ENCODE measurements at regions of chr7 and their contacts with region 1.

Region 1: DNA sequence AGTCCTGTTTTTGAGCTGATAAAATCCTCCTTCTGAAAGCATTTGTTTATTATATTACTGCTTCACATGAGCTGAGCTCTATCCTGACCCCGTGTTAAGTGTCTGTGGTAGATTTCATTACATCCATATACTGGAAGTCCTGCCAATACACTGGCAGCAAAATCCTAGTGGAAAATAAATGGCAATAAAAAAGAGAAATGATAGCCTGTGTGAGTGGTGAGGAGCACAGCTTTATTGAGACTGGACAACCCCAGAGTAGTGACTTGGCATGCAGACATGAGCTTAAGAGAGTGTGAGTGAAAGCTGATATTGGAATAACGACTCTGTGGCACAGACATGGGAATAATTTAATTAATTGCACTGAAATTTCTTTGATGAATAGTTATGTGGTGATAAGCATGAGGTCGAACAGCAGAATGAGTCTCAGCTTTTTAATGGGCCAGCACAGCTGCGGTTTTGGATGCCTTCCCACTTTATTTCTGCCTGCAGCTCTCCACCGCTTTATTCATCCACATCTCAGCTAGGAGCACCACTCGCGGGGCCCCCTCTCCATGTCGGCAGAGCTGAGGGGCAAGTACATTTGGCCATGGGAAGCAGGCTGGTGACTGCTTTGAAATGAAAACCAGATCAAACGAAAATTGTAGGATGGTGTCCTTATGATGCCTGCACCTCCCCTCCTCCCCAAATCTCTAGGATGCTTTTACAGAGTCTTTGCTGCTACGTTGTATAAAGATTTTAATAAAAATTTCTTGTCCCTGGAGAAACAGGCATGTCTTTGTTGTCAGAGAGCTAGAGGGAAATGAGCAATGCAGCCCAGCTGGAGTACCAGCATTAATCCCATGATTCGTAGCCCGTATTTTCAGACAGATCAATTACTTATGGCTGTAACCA is 494.3 kb downstream of the AUTS2 start:
- DNase-seq: peak; percentile 15 to 63
- ATAC-seq: peak; percentile 75 to 90 (median 85)
- H3K4me3 ChIP-seq: peak overlapping the region; percentile 37
- H3K27ac ChIP-seq: peak overlapping the region; percentile 71
- H3K4me1 ChIP-seq: peaks cover 39% of the 10 kb centered on the region
- H3K27me3 ChIP-seq: no peaks in the 10 kb centered on the region
- CTCF ChIP-seq: no peak

Region 2: DNA sequence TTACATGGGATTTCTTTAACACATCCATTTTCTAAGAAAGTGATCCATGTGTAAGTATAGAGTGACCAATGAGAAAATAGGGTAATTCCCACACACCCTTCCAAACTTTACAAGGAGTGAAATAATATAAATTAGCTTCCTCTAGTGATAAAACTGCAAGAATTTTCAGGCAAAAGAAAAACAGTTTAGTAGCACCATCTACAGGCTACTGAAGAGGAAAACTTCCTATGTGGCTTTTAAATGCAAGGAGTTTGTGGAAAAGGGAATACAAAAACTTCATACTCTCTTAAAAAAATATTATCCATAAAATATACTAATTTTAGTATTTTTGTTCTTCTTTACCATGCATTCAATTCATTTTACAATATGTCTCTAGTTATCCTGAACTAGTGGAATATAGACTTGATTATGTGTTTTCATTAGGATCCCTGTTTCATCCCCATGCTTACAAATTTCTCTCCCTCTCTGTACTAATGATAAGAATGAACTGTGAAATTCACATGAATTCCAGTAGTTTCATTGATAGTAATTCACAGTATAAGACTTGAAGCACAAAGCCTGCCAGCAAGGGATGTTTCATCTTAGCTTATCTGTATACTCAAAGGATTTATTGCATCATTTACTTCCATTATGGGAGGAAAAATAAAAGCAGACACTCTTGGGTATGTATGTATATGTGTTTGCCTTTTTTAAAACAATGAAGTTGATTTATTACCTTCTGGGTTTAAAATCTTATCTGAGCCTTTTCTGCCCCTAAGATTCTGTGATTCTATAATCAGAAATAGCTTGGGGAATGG is 51.4 kb before region 1 on chr7:
- intact Hi-C with region 1: no loop called
- DNase-seq: no peak
- ATAC-seq: peak in 1 of 4 donors; percentile 49
- H3K4me3 ChIP-seq: no peak overlapping the region
- H3K27ac ChIP-seq: no peak overlapping the region
- H3K4me1 ChIP-seq: peaks cover 12% of the 10 kb centered on the region
- H3K27me3 ChIP-seq: no peaks in the 10 kb centered on the region
- CTCF ChIP-seq: peak; percentile 55

Region 3: GRCh38 chr7:70060298-70061068 is 32.1 kb before region 1 on chr7:
- intact Hi-C with region 1: loop called in 1 of 2 experiments (anchors 2 kb)
- DNase-seq: no peak
- ATAC-seq: no peak
- H3K4me3 ChIP-seq: no peak overlapping the region
- H3K27ac ChIP-seq: no peak overlapping the region
- H3K4me1 ChIP-seq: peaks cover 30% of the 10 kb centered on the region
- H3K27me3 ChIP-seq: no peaks in the 10 kb centered on the region
- CTCF ChIP-seq: no peak

Region 4: GRCh38 chr7:70072220-70072619 is 20.3 kb before region 1 on chr7:
- intact Hi-C with region 1: loop called in 1 of 2 experiments (anchors 1 kb)
- DNase-seq: no peak
- ATAC-seq: peak; percentile 94 to 98 (median 98)
- H3K4me3 ChIP-seq: no peak overlapping the region
- H3K27ac ChIP-seq: peak overlapping the region; percentile 83
- H3K4me1 ChIP-seq: peaks cover 24% of the 10 kb centered on the region
- H3K27me3 ChIP-seq: no peaks in the 10 kb centered on the region
- CTCF ChIP-seq: no peak

Region 5: DNA sequence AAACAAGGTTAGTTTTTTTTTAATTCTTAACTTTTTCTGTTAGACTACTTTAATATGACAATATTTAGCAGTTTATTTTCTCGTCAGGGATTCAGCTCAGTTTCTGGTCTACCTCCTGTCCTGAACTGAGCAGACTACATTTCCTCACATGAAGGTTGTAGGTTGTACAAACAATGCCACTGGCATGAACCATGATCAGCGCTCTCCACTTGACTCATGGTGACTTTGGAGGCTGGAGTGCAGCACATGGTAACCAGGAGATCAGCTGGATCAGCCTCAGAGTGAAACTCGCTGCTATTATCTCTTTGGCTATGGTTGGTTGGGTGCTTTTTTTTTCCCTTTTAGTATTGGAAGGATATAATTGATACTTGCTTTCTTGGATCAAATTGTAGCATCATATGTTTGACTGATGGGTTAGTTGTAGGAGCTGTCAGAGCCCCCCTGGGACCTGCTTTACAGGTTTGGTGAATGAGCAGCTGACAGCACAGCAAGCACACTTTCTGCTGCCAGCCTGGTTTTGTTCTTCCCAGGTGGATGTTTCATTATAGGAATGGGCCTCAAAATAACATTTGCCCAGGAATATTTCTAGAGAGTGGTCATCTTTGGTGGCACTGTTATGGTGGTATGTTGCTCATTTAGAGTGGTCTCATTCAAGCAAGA is 62.1 kb after region 1 on chr7:
- intact Hi-C with region 1: loop called in 1 of 2 experiments (anchors 5 kb)
- DNase-seq: no peak
- ATAC-seq: peak; percentile 50 to 74 (median 60)
- H3K4me3 ChIP-seq: no peak overlapping the region
- H3K27ac ChIP-seq: peak overlapping the region; percentile 31
- H3K4me1 ChIP-seq: peaks cover 22% of the 10 kb centered on the region
- H3K27me3 ChIP-seq: no peaks in the 10 kb centered on the region
- CTCF ChIP-seq: no peak